GM13976 (cell line): ENCODE measurements at regions of chr9 and their contacts with region 1.

Region 1: DNA sequence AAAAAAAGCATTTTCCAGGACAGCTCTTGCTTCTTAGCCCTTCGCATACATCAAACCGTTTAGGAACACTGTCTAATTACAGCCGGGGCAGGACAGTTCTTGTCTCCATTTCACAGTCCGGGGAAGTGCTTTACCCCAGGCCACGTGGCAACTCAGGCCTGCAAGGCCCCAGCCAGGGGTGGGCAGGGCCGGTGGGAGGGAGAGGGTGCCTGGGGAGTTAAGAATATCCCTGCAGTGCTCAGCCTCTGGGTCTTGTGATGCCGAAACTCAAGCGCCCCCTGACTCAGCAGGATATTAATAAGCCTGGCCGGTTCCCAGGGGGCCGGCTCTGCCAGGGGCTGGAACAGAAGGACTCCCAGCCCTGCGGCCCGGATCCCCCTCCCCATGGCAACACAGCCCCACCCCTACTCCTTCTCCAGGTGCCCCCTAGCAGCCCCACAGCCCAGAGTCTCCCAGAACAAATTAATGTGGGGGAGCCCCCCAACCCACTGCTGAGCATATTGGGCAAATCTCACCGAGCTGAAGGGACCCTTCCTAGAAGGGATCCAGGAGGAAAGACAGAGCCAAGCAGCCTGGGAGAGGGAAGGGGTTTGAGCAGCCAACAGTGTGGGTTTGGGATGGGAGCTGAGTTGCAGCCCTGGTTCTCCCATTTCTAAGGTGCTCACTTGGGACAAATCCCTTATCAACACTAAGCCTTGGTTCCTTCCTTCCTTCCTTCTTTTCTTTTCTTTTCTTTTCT is 45.3 kb downstream of the PLPP7 start:
- DNase-seq: no peak
- CTCF ChIP-seq: no peak

Region 2: DNA sequence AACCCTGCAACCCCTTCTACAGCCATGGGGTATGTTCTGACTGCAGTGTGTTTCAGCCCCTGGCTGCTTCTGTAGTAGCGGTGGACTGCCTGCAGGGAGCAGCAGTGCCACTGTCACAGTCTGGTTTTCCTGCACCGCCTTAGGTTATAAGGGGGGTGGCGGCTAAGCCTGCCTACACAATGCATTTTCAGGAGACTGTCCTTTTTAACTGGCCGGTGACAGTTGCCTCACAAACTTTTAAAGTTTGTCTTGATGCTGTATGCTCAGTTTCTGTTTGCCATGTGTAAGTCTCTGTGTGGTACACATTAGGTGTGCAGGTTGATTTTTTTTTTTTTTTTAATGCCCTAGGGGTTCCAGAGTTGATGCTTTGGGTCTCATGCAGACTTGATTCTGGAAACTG is 156.4 kb before region 1 on chr9:
- in situ Hi-C with region 1: loop called (anchors 10 kb)
- DNase-seq: peak; percentile 83
- CTCF ChIP-seq: peak; percentile 90